PC-9 (cell line): ENCODE measurements at regions of chr19 and their contacts with region 1.

Region 1: DNA sequence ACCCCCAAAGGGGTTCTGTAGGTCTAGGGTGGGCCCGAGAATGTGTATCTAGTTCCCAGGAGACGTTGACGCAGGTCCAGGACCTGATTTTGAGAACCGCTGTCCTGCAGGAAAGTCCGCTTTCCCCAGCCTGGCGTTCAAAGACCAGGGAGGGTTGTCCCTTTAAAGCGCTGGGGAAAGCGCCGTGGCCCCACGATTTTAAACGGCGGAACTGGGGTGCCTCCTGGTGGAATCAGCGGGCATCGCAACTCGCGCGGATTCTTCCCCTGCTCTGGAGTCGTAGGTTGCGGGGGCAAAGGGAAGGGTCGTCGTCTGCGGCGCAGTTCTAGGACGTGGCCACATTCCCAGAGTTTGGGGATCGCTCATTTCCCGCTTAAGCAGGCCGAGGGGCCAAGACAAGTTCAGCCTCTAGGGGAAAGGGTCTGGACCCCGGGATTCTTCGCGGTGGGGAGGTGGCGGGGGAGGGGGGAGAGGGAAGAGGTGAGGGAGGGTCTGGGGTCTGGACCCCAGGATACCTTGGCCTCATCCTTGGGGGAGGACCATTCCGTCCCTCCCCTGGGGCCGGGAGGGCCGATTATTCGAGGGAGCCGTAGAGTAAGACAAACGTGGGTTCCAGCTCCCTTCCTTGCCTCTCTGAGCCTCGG is 7.7 kb downstream of the PNMA8B start:
- DNase-seq: peak; percentile 38 to 76
- H3K4me3 ChIP-seq: no peak overlapping the region
- H3K27ac ChIP-seq: no peak overlapping the region
- H3K4me1 ChIP-seq: no peaks in the 10 kb centered on the region
- H3K27me3 ChIP-seq: peaks cover 92% of the 10 kb centered on the region
- CTCF ChIP-seq: peak; percentile 97

Region 2: DNA sequence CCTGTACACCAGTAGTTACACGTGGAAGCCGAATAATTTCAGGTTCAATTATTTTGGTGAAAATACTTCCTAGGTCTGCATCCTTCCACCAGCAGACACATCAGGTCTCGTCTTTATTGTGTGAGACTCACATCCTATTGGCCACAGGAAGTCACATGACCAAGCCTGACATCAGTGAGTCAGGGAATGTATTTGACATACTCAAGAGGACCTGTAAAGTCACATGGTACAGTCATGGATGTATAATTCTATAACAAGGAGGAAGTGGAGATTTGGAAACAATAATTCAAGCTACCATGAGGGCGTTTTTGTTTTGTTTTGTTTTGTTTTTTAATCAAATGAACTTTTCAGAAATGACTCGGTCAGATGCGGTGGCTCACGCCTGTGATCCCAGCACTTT is 200.3 kb before region 1 on chr19:
- CTCF ChIA-PET with region 1: no interaction called
- POLR2A ChIA-PET with region 1: no interaction called
- intact Hi-C with region 1: loop called (anchors 1 kb)
- DNase-seq: peak in 1 of 2 experiments; percentile 43
- H3K4me3 ChIP-seq: no peak overlapping the region
- H3K27ac ChIP-seq: no peak overlapping the region
- H3K4me1 ChIP-seq: peaks cover 12% of the 10 kb centered on the region; the same call in 1 of the 2 replicates
- H3K27me3 ChIP-seq: peaks cover 7% of the 10 kb centered on the region; the same call in 1 of the 2 replicates
- CTCF ChIP-seq: no peak

Region 3: GRCh38 chr19:46392243-46392801 is 95.6 kb before region 1 on chr19:
- CTCF ChIA-PET with region 1: interaction called, 3 read pairs
- POLR2A ChIA-PET with region 1: no interaction called
- intact Hi-C with region 1: loop called (anchors 2 kb)
- DNase-seq: no peak
- H3K4me3 ChIP-seq: no peak overlapping the region
- H3K27ac ChIP-seq: no peak overlapping the region
- H3K4me1 ChIP-seq: no peaks in the 10 kb centered on the region
- H3K27me3 ChIP-seq: no peaks in the 10 kb centered on the region
- CTCF ChIP-seq: no peak

Region 4: GRCh38 chr19:46404055-46404752 is 83.7 kb before region 1 on chr19:
- CTCF ChIA-PET with region 1: interaction called, 11 read pairs
- POLR2A ChIA-PET with region 1: no interaction called
- intact Hi-C with region 1: loop called (anchors 1 kb)
- DNase-seq: no peak
- H3K4me3 ChIP-seq: no peak overlapping the region
- H3K27ac ChIP-seq: no peak overlapping the region
- H3K4me1 ChIP-seq: no peaks in the 10 kb centered on the region
- H3K27me3 ChIP-seq: peaks cover 47% of the 10 kb centered on the region
- CTCF ChIP-seq: no peak

Region 5: GRCh38 chr19:46520616-46521015 is 32.7 kb after region 1 on chr19:
- CTCF ChIA-PET with region 1: no interaction called
- POLR2A ChIA-PET with region 1: interaction called, 11 read pairs
- intact Hi-C with region 1: no loop called
- DNase-seq: no peak
- H3K4me3 ChIP-seq: no peak overlapping the region
- H3K27ac ChIP-seq: no peak overlapping the region
- H3K4me1 ChIP-seq: no peaks in the 10 kb centered on the region
- H3K27me3 ChIP-seq: no peaks in the 10 kb centered on the region; the same call in 1 of the 2 replicates
- CTCF ChIP-seq: no peak